Endothelial cell of umbilical vein (primary cell): ENCODE measurements at regions of chr7 and their contacts with region 1.

Region 1: DNA sequence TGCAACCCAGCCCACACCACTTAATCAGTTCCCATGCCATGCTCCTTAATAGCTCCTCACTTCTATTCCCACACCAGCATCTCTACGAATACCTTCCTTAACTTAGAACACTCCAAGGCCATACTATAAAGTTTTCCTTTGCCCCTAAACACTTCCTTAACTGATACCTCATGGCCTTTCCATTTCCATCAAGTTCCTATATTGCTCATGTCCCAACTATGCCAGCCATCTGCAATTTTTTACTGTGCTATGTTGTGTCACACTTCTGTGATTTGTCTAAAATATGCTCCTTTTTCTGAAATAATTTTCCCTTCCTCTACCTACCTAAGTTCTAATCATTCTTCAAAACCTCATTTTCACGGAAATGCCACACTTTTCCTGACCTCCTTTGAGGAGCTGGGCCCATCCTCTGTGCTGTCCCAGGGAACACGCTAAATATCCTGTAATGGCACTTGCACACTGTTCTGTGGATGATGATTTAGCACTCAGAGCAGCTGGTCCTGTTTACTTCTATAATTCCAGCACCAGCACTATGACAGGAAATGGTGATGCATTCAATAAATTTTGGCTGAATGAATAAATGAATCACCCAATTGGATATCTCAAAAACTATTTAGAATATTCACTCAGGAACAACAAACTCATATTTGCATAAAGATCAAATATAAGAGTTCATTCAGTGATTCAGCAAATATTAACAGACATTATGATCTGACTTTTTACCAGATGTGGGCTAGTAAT is 266.5 kb upstream of the HGF start:
- DNase-seq: peak; percentile 90
- H3K4me3 ChIP-seq: peak overlapping the region in 1 of 3 experiments; percentile 28
- H3K27ac ChIP-seq: peak overlapping the region; percentile 90
- H3K4me1 ChIP-seq: peaks cover 58% of the 10 kb centered on the region
- H3K27me3 ChIP-seq: no peaks in the 10 kb centered on the region
- CTCF ChIP-seq: no peak
- POLR2A ChIP-seq: peak; percentile 12

Region 2: DNA sequence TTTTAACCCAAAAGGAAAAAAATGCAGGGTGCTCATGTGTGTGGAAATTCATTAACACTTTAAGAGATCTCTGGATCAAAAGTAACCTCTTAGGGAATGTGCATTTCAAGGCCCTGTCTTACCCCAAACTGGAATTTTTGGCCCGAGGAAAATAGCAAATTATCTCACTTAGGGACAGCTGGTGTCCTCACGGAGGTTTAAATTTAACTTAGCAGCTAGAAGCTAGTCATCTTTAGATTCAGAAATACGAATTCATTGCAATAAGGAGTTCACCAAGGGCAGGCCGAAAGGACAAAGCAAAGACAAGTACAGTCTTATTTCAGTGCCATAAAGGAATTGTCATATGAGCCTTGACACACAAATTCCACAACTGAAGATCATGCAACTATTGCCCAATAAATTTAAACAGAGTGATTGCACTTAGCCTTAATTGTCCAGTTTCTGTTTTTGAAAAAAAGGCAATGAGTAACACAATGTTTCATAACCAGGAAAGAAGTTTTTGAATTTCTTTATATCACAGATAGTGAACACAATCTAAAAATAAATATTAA is 1095.0 kb before region 1 on chr7:
- CTCF ChIA-PET with region 1: no interaction called
- POLR2A ChIA-PET with region 1: no interaction called
- dilution Hi-C with region 1: no loop called
- intact Hi-C with region 1: loop called (anchors 5 kb)
- DNase-seq: no peak
- H3K4me3 ChIP-seq: no peak overlapping the region
- H3K27ac ChIP-seq: peak overlapping the region; percentile 10
- H3K4me1 ChIP-seq: peaks cover 28% of the 10 kb centered on the region
- H3K27me3 ChIP-seq: no peaks in the 10 kb centered on the region
- CTCF ChIP-seq: no peak
- POLR2A ChIP-seq: no peak